Thyroid gland (tissue), 4 donors: ENCODE measurements at regions of chr9 and their contacts with region 1.

Region 1: DNA sequence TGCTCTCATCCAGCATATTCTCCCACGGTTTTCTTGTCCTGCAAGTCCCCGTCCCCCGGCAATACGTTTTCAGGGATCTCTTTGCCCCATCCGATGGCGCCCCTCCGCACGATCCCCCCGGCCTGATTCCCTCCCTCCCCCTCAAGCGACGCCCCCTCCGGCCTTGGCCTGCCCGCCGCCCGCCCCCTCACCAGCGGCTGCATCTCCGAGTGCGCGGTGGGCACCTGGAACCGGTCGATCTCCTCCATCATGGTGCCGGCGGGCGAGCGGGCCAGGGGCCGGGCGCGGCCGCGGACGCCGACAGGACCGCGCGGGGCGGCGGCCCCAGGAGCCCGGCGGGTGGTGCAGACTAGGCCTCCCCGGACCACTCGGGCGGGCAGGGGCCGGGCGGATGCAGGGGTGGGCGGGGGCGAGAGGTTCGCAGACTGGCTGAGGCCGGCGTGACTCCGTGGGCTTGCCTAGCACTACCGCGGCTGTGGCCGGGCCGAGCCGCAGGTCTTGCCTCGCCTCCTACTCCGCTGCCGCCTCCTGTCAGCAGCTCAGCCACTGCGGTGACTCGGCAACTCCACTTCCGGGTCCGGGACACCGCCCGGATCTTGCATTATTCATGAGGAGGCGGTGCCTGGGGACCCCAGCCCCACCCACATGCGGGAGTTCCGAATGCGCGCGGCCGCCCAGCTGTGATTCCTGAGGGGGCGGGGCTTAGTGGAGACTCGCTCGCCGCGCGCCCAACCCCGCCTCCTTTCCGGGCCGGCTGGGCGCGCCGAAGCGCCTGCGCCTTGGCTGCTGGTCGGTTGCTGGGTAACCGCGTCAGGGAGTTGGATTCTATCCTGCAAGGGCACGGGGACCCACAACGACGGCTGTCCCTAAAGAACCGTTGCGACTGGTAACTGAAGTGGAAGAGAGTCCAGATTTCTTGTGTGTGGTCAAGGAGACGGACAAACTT is at the starts of genes DNAI1 and FAM219A:
- DNase-seq: peak; percentile 98 to 99
- H3K4me3 ChIP-seq: peak within 1 kb of the TSS; percentile 29 to 80 (median 44)
- H3K27ac ChIP-seq: peak within 1 kb of the TSS in 2 of 3 donors; percentile 27 to 48
- H3K4me1 ChIP-seq: peaks cover 14 to 29% of the 10 kb centered on the region in 2 donors
- H3K27me3 ChIP-seq: no peaks in the 10 kb centered on the region
- CTCF ChIP-seq: no peak
- POLR2A ChIP-seq: peak in 1 of 2 donors; percentile 92
- total RNA-seq, gene DNAI1: 0.81 to 0.89 TPM in 2 of 4 donors, not detected in the others
- total RNA-seq, gene FAM219A: 6.6 to 14.3 (median 10.5) TPM

Region 2: DNA sequence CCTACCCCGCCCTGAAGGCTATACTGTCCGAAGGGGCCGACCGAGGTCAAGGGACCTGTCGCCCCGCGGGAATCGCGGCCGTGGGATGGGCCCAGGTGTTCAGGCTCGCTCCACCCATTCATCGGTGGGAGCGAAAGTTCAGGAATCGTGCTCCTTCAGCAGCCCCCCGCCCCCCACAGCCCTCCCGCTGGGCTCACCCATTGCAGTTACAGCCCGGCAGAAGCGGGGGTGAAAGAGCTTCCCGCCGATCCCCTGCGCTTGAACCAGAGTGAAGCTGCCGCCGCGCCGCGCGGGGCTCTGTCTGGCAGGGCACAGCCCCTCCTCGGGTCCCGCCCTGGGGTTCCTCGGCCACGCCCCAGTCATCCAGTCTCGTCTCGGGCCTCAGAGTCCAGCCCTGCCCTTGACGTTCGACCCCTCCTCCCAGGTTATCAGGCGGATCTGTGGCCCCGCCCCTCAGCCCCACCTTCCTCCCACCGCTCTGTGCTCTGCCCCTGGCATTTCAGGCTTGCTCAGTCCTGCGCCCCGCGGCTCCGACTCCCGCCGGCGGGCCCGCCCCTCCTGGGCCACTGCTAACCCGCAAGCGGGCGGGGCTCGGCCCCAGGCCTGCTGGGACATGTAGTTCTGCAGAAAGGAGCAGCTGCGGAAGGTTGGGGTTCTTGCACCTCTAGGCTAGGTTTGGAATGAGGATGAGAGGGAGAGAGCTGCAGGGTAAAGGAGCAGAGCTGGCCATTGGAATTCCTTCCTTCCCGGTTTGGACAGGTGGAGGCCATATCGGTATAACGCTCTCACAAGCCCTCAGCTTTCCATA is 81.5 kb before region 1 on chr9 and contains the start of gene MYORG:
- intact Hi-C with region 1: loop called (anchors 5 kb)
- DNase-seq: peak; percentile 99
- H3K4me3 ChIP-seq: peak within 1 kb of the TSS; percentile 0 to 55 (median 30)
- H3K27ac ChIP-seq: peak within 1 kb of the TSS; percentile 28 to 73 (median 57)
- H3K4me1 ChIP-seq: peaks cover 20 to 27% of the 10 kb centered on the region in 2 donors
- H3K27me3 ChIP-seq: no peaks in the 10 kb centered on the region
- CTCF ChIP-seq: no peak
- POLR2A ChIP-seq: peak; percentile 12 to 86
- total RNA-seq, gene MYORG: 3.2 to 9.2 (median 6.0) TPM